Pancreas (tissue), 10 donors: ENCODE measurements at regions of chr3 and their contacts with region 1.

Region 1: DNA sequence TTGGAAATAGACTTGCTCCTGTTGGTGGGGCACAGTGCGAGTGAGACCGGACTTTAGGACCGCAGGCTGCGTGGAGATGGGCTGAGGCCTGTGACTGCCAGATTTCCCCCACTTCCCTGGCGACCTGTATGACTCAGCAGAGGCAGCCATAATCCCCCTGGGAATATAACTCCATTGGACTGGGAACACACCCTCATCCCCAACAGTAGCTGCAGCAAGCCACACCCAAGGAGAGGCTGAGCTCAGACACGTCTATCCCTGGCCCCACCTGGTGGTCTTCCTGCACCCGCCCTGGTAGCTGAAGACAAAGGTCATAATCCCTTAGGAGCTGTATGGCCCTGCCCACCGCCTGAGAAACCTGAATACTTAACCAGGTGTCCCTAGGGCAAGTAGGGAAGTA is 42.6 kb downstream of the DZIP1L start:
- DNase-seq: no peak
- ATAC-seq: no peak
- H3K4me3 ChIP-seq: no peak overlapping the region
- H3K27ac ChIP-seq: no peak overlapping the region
- H3K4me1 ChIP-seq: no peaks in the 10 kb centered on the region
- H3K27me3 ChIP-seq: no peaks in the 10 kb centered on the region
- CTCF ChIP-seq: no peak

Region 2: GRCh38 chr3:138118612-138119422 is 46.0 kb after region 1 on chr3:
- intact Hi-C with region 1: loop called in 1 of 3 experiments (anchors 5 kb)
- DNase-seq: peak; percentile 50 to 87 (median 76)
- ATAC-seq: peak; percentile 43 to 75 (median 73)
- H3K4me3 ChIP-seq: no peak overlapping the region
- H3K27ac ChIP-seq: no peak overlapping the region
- H3K4me1 ChIP-seq: no peaks in the 10 kb centered on the region
- H3K27me3 ChIP-seq: peaks cover 0 to 3% (median 0%) of the 10 kb centered on the region in 4 donors
- CTCF ChIP-seq: peak; percentile 44 to 73 (median 68)